ENCODE measurements at regions of chr20 and their contacts with region 1.

Region 1: DNA sequence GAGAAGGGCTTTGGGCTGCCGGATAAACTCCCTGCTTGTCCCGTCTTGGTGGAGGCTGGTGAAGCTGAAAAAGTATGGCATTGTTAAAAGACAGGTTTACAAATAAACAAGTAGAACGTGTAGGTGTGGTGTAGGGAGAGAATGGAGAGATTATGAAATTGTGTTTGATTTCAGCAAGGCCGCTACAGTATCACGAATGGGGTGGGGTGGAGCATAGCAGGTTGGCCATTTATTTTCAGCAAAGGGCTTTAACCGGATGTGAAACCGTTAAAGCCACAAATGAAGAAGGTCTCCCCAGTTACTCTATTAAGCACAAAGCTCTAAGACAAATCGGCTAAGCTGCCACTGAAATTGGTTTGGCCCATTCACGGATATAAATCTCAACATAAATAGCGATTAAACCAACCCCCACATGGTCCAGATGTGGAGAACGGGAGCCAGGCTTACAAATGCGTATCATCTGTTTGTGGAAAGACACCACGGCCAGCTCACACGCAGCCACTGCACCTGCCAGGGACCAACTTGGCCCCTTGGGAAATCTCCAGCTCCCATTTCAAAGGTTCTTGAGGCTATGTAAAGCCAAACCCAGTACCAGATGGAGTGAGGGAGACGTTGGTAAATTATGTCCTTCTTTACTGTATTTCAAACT is 94.0 kb downstream of the ZMYND8 start:
- DNase-seq: no peak
- H3K4me3 ChIP-seq: no peak overlapping the region
- H3K27ac ChIP-seq: peak overlapping the region in 47 of 59 donors; percentile 6 to 84 (median 62)
- H3K27me3 ChIP-seq: no peaks in the 10 kb centered on the region
- CTCF ChIP-seq: no peak

Region 2: DNA sequence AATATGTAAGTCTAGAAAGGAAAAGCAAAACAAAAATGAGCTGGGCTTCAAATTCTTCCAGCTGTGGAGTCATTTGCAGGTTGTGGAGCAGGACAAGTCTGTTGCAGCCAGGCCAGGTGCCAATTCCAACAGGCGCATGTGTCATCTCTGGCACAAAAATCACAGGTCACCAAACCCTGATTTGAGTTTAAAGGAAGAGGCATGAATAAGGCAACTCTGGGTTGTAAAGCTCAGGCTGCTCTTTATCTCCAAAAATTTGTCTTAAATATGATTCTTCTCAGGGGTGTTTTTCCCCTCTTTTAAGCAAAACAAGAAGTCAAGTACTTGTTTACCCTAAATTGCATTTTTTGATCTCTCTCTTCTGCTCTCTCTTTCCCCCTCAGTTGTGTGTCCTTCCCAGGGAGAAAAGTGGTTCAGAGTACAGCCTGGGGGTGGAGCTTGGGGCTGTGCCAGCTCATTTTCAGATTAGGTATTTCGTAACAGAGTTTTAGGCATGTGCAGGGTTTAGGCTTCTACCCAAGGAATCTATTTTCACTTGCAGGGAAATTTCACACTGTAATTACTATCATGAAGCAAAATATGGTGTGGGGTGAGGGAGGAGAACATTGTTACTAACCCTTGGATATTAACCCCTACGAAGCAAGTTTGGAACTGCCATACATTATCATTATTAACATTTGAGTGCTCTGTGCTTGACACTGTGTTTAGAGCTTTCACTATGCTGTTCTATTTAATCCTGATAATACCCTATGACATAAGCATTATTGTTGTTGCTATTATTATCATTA is 230.9 kb after region 1 on chr20:
- intact Hi-C with region 1: loop called in 1 of 2 experiments (anchors 10 kb)
- DNase-seq: peak in 5 of 10 donors; percentile 27 to 54 (median 33)
- H3K4me3 ChIP-seq: peak overlapping the region in 1 of 59 donors; percentile 7
- H3K27ac ChIP-seq: peak overlapping the region in 14 of 59 donors; percentile 3 to 72 (median 30)
- H3K27me3 ChIP-seq: no peaks in the 10 kb centered on the region
- CTCF ChIP-seq: no peak